ENCODE measurements at regions of chr2 and their contacts with region 1.

Region 1: DNA sequence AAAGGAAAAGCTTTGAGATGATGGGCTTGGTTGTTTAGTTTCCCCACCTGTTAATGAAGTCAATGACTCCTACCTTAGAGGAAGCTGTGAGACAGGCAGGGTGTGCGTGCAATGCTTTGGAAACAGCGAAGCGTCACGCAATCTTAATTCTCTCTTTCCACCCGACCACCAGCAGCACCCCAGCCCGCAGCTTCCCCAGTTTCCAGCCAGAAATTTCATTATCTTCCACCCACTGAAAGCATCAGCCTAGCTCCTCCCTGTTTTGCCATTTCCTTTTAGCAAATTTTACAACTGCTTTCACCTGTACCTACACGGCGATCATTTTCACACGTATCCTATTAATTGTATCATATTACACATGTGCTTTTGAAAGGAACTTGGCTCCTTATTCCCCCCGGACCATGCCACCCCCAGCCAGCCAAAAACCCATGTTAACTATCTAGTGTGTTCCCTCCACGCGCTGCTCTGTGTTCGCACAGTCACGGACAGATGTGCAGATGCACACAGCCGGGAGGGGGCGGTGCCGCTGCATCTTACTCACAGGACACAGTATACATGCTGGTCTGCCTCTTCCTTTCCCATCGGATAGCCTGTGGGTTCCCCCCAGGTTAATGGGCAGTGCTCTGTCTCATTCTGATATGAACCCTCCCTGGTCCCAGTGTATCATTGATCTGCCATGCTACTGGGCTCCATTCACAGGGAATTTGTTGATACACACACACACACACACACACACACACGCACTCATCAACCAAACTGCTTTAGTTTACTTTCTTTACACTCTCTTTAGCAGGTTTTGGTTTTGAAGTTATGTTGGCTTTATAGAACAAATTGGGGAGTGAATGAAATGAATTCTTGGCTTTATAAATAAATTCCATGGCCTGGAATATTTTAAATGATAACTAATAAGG is 22.4 kb downstream of the CYP27C1 start:
- DNase-seq: peak; percentile 85 to 88
- H3K4me3 ChIP-seq: peak overlapping the region; percentile 35
- H3K4me3 Mint-ChIP-seq: peak overlapping the region; percentile 80
- H3K27ac Mint-ChIP-seq: peak overlapping the region; percentile 18
- H3K4me1 ChIP-seq: no peaks in the 10 kb centered on the region
- H3K4me1 Mint-ChIP-seq: no peaks in the 10 kb centered on the region
- H3K27me3 ChIP-seq: no peaks in the 10 kb centered on the region
- H3K27me3 Mint-ChIP-seq: no peaks in the 10 kb centered on the region
- CTCF ChIP-seq: peak; percentile 79 to 97

Region 2: DNA sequence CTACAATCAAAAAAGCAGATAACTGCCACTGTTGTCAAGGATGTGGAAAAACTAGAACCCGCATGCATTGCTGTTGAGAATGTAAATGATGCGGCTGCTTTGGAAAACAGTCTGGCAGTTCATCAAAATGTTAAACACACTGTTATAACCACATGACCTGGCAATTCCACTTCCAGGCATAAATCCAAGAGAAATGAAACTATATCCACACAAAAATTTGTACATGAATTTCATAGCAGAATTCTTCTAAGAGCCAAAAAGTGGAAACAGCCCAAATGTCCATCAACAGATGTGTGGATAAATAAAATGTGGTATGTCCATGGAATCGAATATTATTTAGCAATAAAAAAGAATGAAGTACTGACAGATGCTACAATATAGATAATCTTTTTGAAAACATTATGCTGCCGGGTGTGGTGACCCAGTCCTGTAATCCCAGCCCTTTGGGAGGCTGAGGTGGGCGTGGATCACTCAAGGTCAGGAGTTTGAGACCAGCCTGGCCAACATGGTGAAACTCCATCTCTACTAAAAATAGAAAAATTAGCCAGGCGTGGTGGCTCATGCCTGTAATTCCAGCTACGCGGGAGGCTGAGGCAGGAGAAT is 64.2 kb after region 1 on chr2:
- CTCF ChIA-PET with region 1: interaction called, 8 read pairs
- POLR2A ChIA-PET with region 1: no interaction called
- intact Hi-C with region 1: loop called (anchors 5 kb)
- DNase-seq: no peak
- H3K4me3 ChIP-seq: no peak overlapping the region
- H3K4me3 Mint-ChIP-seq: no peak overlapping the region
- H3K27ac Mint-ChIP-seq: no peak overlapping the region
- H3K4me1 ChIP-seq: no peaks in the 10 kb centered on the region
- H3K4me1 Mint-ChIP-seq: no peaks in the 10 kb centered on the region
- H3K27me3 ChIP-seq: no peaks in the 10 kb centered on the region
- H3K27me3 Mint-ChIP-seq: no peaks in the 10 kb centered on the region
- CTCF ChIP-seq: no peak

Region 3: DNA sequence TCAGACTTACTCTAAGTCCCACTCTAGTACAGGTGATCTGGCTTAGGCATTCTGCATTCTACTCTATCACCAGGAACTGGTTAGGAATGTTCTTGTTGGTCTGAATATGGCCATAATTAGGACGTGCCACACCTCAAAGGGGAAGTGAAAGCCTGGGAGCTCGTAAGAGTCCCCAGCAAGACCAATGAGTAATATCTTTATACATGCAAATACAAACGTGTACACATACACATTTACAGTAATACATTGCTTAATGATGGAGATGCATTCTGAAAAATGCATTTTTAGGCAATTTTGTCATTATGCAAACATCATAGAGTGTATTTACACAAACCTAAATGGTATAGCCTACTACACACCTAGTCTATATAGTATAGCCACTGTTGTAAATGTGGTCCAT is 115.7 kb after region 1 on chr2:
- CTCF ChIA-PET with region 1: interaction called, 4 read pairs
- POLR2A ChIA-PET with region 1: no interaction called
- intact Hi-C with region 1: loop called (anchors 2 kb)
- DNase-seq: no peak
- H3K4me3 ChIP-seq: no peak overlapping the region
- H3K4me3 Mint-ChIP-seq: no peak overlapping the region
- H3K27ac Mint-ChIP-seq: no peak overlapping the region
- H3K4me1 ChIP-seq: peaks cover 15% of the 10 kb centered on the region
- H3K4me1 Mint-ChIP-seq: peaks cover 16% of the 10 kb centered on the region
- H3K27me3 ChIP-seq: no peaks in the 10 kb centered on the region
- H3K27me3 Mint-ChIP-seq: no peaks in the 10 kb centered on the region
- CTCF ChIP-seq: no peak

Region 4: GRCh38 chr2:127415593-127416505 is 218.1 kb after region 1 on chr2:
- CTCF ChIA-PET with region 1: interaction called, 9 read pairs
- POLR2A ChIA-PET with region 1: no interaction called
- intact Hi-C with region 1: loop called (anchors 1 kb)
- DNase-seq: peak; percentile 86 to 92
- H3K4me3 ChIP-seq: peak overlapping the region; percentile 47
- H3K4me3 Mint-ChIP-seq: peak overlapping the region; percentile 76
- H3K27ac Mint-ChIP-seq: peak overlapping the region; percentile 46
- H3K4me1 ChIP-seq: peaks cover 36% of the 10 kb centered on the region
- H3K4me1 Mint-ChIP-seq: peaks cover 35% of the 10 kb centered on the region
- H3K27me3 ChIP-seq: no peaks in the 10 kb centered on the region
- H3K27me3 Mint-ChIP-seq: no peaks in the 10 kb centered on the region
- CTCF ChIP-seq: peak; percentile 89 to 92

Region 5: DNA sequence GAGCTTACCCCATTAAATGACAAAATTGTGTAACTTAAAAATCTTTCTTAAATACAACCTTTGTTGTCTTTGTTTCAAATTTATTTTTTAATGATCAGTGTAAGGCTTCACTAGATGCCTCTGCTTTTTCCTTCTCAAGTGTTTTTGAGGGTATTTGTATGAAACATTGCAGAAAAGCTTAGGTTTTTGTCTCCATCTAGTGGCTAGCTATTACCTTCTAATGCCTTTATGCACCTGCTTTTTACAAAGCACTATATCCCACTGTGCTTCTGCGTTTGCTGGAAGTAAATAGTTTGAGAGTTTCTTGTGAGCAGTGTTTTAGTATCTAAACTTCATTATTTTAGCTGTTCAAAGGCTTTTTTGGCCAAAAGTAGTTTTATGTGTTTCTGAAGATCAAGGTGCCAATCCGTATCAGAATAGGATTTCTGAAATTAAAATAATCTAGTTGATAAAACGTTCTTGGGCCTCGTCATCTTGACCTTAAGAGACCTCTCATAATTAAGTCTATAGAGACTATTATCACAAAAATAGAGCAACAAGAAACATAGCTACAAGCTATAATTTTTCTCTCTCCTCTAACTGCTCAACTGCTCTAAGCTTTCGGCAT is 281.6 kb after region 1 on chr2:
- CTCF ChIA-PET with region 1: interaction called, 28 read pairs
- POLR2A ChIA-PET with region 1: no interaction called
- intact Hi-C with region 1: loop called (anchors 1 kb)
- DNase-seq: peak in 1 of 2 experiments; percentile 48
- H3K4me3 ChIP-seq: no peak overlapping the region
- H3K4me3 Mint-ChIP-seq: no peak overlapping the region
- H3K27ac Mint-ChIP-seq: no peak overlapping the region
- H3K4me1 ChIP-seq: no peaks in the 10 kb centered on the region
- H3K4me1 Mint-ChIP-seq: no peaks in the 10 kb centered on the region
- H3K27me3 ChIP-seq: no peaks in the 10 kb centered on the region
- H3K27me3 Mint-ChIP-seq: no peaks in the 10 kb centered on the region
- CTCF ChIP-seq: peak; percentile 71 to 73

Region 6: GRCh38 chr2:127675331-127676261 is 477.9 kb after region 1 on chr2 and contains the start of gene LIMS2:
- CTCF ChIA-PET with region 1: interaction called, 10 read pairs
- POLR2A ChIA-PET with region 1: no interaction called
- intact Hi-C with region 1: no loop called
- DNase-seq: peak; percentile 67 to 74
- H3K4me3 ChIP-seq: peak within 1 kb of the TSS; percentile 56
- H3K4me3 Mint-ChIP-seq: peak within 1 kb of the TSS; percentile 83
- H3K27ac Mint-ChIP-seq: no peak within 1 kb of the TSS
- H3K4me1 ChIP-seq: peaks cover 6% of the 10 kb centered on the region; the same call in 1 of the 2 replicates
- H3K4me1 Mint-ChIP-seq: no peaks in the 10 kb centered on the region
- H3K27me3 ChIP-seq: peaks cover 1% of the 10 kb centered on the region; the same call in 1 of the 2 replicates
- H3K27me3 Mint-ChIP-seq: peaks cover 8% of the 10 kb centered on the region
- CTCF ChIP-seq: peak in 1 of 2 experiments; percentile 36
- total RNA-seq, gene LIMS2: 9.6 and 10.0 TPM in 2 replicates

Region 7: GRCh38 chr2:127706215-127706990 is 508.7 kb after region 1 on chr2:
- CTCF ChIA-PET with region 1: no interaction called
- POLR2A ChIA-PET with region 1: no interaction called
- intact Hi-C with region 1: no loop called
- DNase-seq: no peak
- H3K4me3 ChIP-seq: no peak overlapping the region
- H3K4me3 Mint-ChIP-seq: no peak overlapping the region
- H3K27ac Mint-ChIP-seq: no peak overlapping the region
- H3K4me1 ChIP-seq: peaks cover 8% of the 10 kb centered on the region; the same call in 1 of the 2 replicates
- H3K4me1 Mint-ChIP-seq: peaks cover 6% of the 10 kb centered on the region
- H3K27me3 ChIP-seq: no peaks in the 10 kb centered on the region
- H3K27me3 Mint-ChIP-seq: no peaks in the 10 kb centered on the region
- CTCF ChIP-seq: no peak

Region 8: GRCh38 chr2:127913808-127914457 is 716.2 kb after region 1 on chr2:
- CTCF ChIA-PET with region 1: no interaction called
- POLR2A ChIA-PET with region 1: no interaction called
- intact Hi-C with region 1: no loop called
- DNase-seq: no peak
- H3K4me3 ChIP-seq: no peak overlapping the region
- H3K4me3 Mint-ChIP-seq: no peak overlapping the region
- H3K27ac Mint-ChIP-seq: no peak overlapping the region
- H3K4me1 ChIP-seq: peaks cover 1% of the 10 kb centered on the region
- H3K4me1 Mint-ChIP-seq: peaks cover 1% of the 10 kb centered on the region
- H3K27me3 ChIP-seq: no peaks in the 10 kb centered on the region
- H3K27me3 Mint-ChIP-seq: no peaks in the 10 kb centered on the region
- CTCF ChIP-seq: no peak